Dendritic cell treated with granulocyte-macrophage colony-stimulating factor and Interleukin-4, amounts not matched to agents 40 ng/mL and 50 ng/mL, for 4 days (primary cell): ENCODE measurements at regions of chr1 and their contacts with region 1.

Region 1: GRCh38 chr1:29849038-29849750 is 612.9 kb downstream of the PTPRU start:
- H3K4me3 Mint-ChIP-seq: no peak overlapping the region
- H3K27ac Mint-ChIP-seq: no peak overlapping the region
- H3K4me1 Mint-ChIP-seq: no peaks in the 10 kb centered on the region
- H3K27me3 Mint-ChIP-seq: peaks cover 5% of the 10 kb centered on the region

Region 2: GRCh38 chr1:29379443-29380073 is 469.6 kb before region 1 on chr1:
- intact Hi-C with region 1: loop called (anchors 5 kb)
- H3K4me3 Mint-ChIP-seq: no peak overlapping the region
- H3K27ac Mint-ChIP-seq: no peak overlapping the region
- H3K4me1 Mint-ChIP-seq: no peaks in the 10 kb centered on the region
- H3K27me3 Mint-ChIP-seq: peaks cover 7% of the 10 kb centered on the region

Region 3: DNA sequence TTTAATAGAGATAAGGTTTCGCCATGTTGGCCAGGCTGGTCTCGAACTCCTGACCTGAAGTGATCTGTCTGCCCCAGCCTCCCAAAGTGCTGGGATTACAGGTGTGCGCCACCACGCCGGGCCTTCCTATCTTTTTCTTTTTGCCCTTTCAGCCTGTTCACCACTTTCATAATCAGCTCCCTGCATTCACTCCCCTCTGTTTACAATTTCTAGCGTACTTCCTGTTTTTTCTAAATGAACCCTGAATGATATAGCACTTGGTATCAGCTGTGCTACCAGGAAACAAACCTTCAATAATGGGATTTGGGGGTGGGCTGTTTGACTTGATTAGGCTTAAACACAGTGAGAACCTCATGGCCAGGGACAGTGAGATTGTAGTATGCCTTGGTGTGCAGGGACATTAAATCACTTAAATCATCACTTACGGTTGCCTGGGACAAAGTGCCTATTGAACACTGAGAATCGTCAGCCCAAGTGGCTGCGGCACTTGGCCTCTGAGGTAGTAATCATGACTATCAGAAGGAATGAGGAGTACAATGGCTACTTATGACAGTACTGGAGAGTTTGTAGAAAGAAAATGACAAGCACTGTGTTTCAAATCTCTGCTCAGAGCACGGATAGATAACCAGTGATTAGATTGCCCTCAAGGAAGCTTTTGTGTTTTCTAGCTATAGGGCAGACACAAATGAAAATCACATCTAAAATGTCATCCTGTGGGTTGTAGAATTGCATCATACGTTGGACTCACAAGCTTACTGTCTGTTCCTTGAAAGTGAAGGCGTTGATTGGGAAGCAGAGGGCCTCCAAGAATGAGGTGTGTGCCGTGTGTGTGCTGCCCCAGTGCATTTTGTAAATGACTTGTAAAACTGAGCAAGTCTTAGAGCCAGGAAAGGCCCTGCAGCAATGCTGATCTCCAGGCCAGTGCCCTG is 212.4 kb after region 1 on chr1:
- intact Hi-C with region 1: no loop called
- H3K4me3 Mint-ChIP-seq: no peak overlapping the region
- H3K27ac Mint-ChIP-seq: no peak overlapping the region
- H3K4me1 Mint-ChIP-seq: no peaks in the 10 kb centered on the region
- H3K27me3 Mint-ChIP-seq: peaks cover 4% of the 10 kb centered on the region

Region 4: DNA sequence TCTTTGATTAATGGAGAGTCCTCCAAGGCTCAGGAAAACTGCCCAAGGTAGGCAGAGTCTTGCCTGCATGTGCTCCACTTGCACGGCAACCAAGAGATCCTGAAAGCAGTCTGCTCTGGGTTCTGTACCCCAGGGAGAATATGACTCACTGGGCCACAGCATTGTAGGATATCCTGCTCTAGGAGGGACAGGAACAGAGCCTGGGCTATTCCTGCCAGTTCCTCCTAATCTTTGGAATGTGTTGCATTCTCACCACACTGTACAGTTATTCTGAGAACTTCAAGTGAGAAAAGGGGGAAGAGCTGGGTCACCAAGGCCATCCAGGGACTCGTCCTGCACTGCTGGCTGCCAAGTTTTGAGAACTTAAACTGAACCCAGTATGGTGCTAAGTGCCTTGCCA is 595.7 kb after region 1 on chr1:
- intact Hi-C with region 1: no loop called
- H3K4me3 Mint-ChIP-seq: no peak overlapping the region
- H3K27ac Mint-ChIP-seq: no peak overlapping the region
- H3K4me1 Mint-ChIP-seq: no peaks in the 10 kb centered on the region
- H3K27me3 Mint-ChIP-seq: peaks cover 4% of the 10 kb centered on the region